T-cell (primary cell): ENCODE measurements at regions of chr7 and their contacts with region 1.

Region 1: GRCh38 chr7:100889761-100890634 is 483 bp upstream of the UFSP1 start:
- DNase-seq: peak; percentile 81 to 95 (median 87)
- ATAC-seq: peak; percentile 89
- H3K4me3 ChIP-seq: peak overlapping the region; percentile 38 to 70
- H3K4me3 Mint-ChIP-seq: peak overlapping the region; percentile 79 to 83 (median 81)
- H3K27ac ChIP-seq: no peak overlapping the region
- H3K27ac Mint-ChIP-seq: peak overlapping the region in 1 of 2 donors; percentile 64
- H3K4me1 ChIP-seq: peaks cover 16 to 65% of the 10 kb centered on the region in 2 experiments
- H3K4me1 Mint-ChIP-seq: peaks cover 28 to 50% (median 31%) of the 10 kb centered on the region in 3 donors
- H3K27me3 ChIP-seq: peaks cover 0 to 49% of the 10 kb centered on the region in 2 experiments
- H3K27me3 Mint-ChIP-seq: peaks cover 17 to 31% of the 10 kb centered on the region in 2 donors

Region 2: GRCh38 chr7:100852048-100852872 is 37.7 kb before region 1 on chr7 and contains the start of gene SLC12A9:
- CTCF ChIA-PET with region 1: interaction called in 1 of 2 experiments, 15 read pairs
- POLR2A ChIA-PET with region 1: interaction called in 1 of 2 experiments, 3 read pairs
- DNase-seq: peak; percentile 66 to 89 (median 77)
- ATAC-seq: peak; percentile 93 to 97 (median 96)
- H3K4me3 ChIP-seq: peak within 1 kb of the TSS; percentile 66 to 68
- H3K4me3 Mint-ChIP-seq: peak within 1 kb of the TSS; percentile 86 to 90 (median 89)
- H3K27ac ChIP-seq: peak within 1 kb of the TSS; percentile 70
- H3K27ac Mint-ChIP-seq: peak within 1 kb of the TSS; percentile 84 to 88
- H3K4me1 ChIP-seq: peaks cover 3 to 26% of the 10 kb centered on the region in 2 experiments
- H3K4me1 Mint-ChIP-seq: peaks cover 11 to 32% (median 19%) of the 10 kb centered on the region in 3 donors
- H3K27me3 ChIP-seq: no peaks in the 10 kb centered on the region
- H3K27me3 Mint-ChIP-seq: no peaks in the 10 kb centered on the region
- total RNA-seq, gene SLC12A9: 49.9 to 72.6 (median 70.2) TPM

Region 3: GRCh38 chr7:100874577-100875355 is 15.2 kb before region 1 on chr7 and contains the start of gene SRRT:
- CTCF ChIA-PET with region 1: interaction called in 1 of 2 experiments, 13 read pairs
- POLR2A ChIA-PET with region 1: interaction called, 10 to 21 read pairs
- DNase-seq: peak; percentile 95 to 99 (median 98)
- ATAC-seq: peak; percentile 95 to 98 (median 96)
- H3K4me3 ChIP-seq: peak within 1 kb of the TSS; percentile 59 to 73
- H3K4me3 Mint-ChIP-seq: peak within 1 kb of the TSS; percentile 92 to 98 (median 98)
- H3K27ac ChIP-seq: peak within 1 kb of the TSS; percentile 93
- H3K27ac Mint-ChIP-seq: peak within 1 kb of the TSS; percentile 95 to 98
- H3K4me1 ChIP-seq: peaks cover 6 to 47% of the 10 kb centered on the region in 2 experiments
- H3K4me1 Mint-ChIP-seq: peaks cover 48 to 55% (median 53%) of the 10 kb centered on the region in 3 donors
- H3K27me3 ChIP-seq: no peaks in the 10 kb centered on the region
- H3K27me3 Mint-ChIP-seq: no peaks in the 10 kb centered on the region
- total RNA-seq, gene SRRT: 224 to 308 (median 243) TPM